ENCODE measurements at regions of chrX and their contacts with region 1.

Region 1: DNA sequence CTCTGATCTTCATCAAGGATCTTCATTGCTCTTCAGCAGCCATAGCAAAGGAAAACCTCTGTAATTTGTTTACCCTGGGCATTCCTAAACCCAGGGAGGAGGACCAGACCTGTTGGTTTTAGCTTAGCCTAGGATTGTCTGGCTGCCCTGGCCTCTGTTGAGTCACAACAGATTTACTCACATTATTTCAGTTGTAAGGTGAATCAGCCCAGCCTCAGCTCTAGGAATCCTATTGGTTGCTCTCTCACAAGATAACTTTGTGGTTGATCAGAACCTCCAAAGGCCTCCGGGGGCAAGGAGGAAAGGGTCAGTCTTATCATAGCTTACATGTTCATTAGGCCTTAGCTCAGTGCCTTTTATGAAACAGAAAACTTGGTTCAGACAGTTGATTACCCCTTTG is 41.0 kb downstream of the PDK3 start:
- DNase-seq: no peak
- ATAC-seq: no peak
- H3K4me3 ChIP-seq: no peak overlapping the region
- H3K27ac ChIP-seq: no peak overlapping the region
- H3K4me1 ChIP-seq: no peaks in the 10 kb centered on the region
- H3K27me3 ChIP-seq: no peaks in the 10 kb centered on the region

Region 2: GRCh38 chrX:24133280-24133679 is 372.8 kb before region 1 on chrX:
- intact Hi-C with region 1: no loop called
- DNase-seq: no peak
- ATAC-seq: no peak
- H3K4me3 ChIP-seq: no peak overlapping the region
- H3K27ac ChIP-seq: no peak overlapping the region
- H3K4me1 ChIP-seq: no peaks in the 10 kb centered on the region
- H3K27me3 ChIP-seq: no peaks in the 10 kb centered on the region

Region 3: GRCh38 chrX:24259544-24260240 is 246.4 kb before region 1 on chrX:
- intact Hi-C with region 1: loop called in 1 of 4 experiments (anchors 10 kb)
- DNase-seq: no peak
- ATAC-seq: peak in 1 of 2 donors; percentile 61
- H3K4me3 ChIP-seq: no peak overlapping the region
- H3K27ac ChIP-seq: no peak overlapping the region
- H3K4me1 ChIP-seq: no peaks in the 10 kb centered on the region
- H3K27me3 ChIP-seq: no peaks in the 10 kb centered on the region

Measured in right cardiac atrium (tissue), 5 donors.